Ascending aorta (tissue), 2 donors: ENCODE measurements at regions of chr7 and their contacts with region 1.

Region 1: DNA sequence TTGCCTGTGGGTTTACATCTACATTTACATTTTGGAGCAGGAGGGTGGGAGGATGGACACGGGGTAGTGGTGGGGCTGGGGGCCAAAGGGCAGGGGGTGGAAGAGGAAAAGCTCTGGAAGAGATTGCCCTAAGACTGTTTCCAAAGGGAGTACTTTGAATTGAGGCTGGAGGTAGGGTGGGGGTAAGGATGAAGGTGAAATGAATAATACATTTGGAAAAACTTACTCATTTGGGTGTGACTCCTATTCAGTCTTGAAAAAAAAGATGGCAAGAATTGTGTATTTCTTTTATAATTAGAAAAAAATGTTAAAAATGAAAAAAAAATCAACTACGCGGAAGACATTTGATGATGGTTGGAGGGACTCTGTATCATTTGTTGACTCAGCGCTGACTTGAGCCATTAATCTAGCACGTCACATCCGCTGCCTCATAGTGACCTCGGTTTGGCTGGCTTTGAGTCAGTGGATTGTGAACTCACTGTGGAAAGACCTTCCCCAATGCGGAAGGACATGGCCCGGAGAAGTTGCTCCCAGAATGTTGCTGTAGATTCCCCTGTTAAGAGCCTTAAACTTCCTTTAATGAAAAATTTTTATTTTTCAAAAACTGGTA is 2.8 kb downstream of the FAM180A start:
- DNase-seq: peak; percentile 75 to 96
- H3K4me3 ChIP-seq: peak overlapping the region; percentile 16 to 62
- H3K27ac ChIP-seq: peak overlapping the region; percentile 94
- H3K4me1 ChIP-seq: peaks cover 23 to 45% of the 10 kb centered on the region in 2 donors
- H3K27me3 ChIP-seq: no peaks in the 10 kb centered on the region
- CTCF ChIP-seq: no peak

Region 2: DNA sequence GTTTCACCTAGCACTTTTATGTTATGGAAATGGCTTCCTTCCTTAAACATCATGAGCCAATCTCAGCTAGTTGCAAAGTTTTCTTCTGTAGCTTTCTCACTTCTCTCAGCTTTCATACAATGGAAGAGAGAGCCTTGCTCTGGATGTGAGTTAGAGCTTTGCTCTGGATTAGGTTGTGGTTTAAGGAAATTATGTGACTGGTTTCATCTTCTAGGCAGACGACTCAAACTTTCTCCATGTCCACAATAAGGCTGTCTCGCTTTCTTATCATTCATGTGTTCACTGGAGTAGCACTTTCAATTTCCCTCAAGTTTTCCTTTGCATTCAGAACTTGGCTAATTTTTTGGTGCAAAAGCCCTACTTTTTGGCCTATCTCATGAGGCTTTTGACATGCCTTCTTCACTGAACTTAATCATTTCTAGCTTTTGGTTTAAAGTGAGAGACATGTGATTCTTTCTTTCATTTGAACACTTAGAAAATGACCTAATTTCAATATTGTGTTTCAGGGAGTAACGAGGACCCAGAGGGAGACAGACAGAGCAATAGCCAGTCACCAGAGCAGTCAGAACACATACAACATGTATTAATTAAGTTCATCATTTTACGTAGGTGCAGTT is 285.7 kb before region 1 on chr7:
- intact Hi-C with region 1: no loop called
- DNase-seq: no peak
- H3K4me3 ChIP-seq: no peak overlapping the region
- H3K27ac ChIP-seq: no peak overlapping the region
- H3K4me1 ChIP-seq: no peaks in the 10 kb centered on the region
- H3K27me3 ChIP-seq: no peaks in the 10 kb centered on the region
- CTCF ChIP-seq: no peak

Region 3: DNA sequence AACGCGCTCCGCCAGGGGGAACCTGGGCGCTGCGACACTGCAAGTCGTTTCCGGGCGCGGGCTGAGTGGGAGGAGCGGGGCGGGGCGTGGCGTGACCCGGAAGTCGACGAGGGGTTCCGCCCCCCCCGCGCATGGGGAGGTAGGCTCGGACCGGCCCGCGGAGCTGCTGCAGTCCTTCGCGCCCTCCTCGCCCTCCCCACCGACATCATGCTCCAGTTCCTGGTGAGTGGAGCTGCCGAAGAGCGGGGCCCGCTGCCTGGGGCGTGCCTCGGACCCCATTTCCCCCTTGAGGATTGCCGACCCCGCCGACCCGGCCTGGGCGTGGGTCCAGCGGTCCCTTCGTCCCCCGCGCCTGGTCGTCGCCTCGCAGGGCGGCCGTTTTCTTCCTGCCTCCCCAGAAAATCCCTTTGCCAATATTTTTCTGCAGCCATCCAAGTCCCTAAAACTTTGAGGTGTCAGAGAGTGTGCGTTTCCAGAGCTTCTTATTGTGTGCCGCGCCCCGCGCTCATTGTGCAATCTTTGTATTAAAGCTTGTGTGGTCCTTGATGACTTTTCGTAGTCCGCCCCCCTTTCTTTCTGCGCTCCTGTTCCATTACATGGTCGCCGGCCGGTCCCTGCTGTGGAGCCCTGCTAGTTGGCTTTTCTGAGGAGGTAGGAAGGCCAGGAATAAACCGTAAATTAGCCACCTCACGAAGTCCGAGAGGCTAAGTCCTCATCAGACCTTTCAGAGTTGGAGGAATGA is 83.3 kb before region 1 on chr7 and contains the start of gene STMP1:
- intact Hi-C with region 1: loop called (anchors 2 kb)
- DNase-seq: peak; percentile 81 to 98
- H3K4me3 ChIP-seq: peak within 1 kb of the TSS; percentile 73 to 86
- H3K27ac ChIP-seq: peak within 1 kb of the TSS; percentile 87 to 96
- H3K4me1 ChIP-seq: peaks cover 0 to 19% of the 10 kb centered on the region in 2 donors
- H3K27me3 ChIP-seq: no peaks in the 10 kb centered on the region
- CTCF ChIP-seq: peak in 1 of 3 experiments; percentile 95
- total RNA-seq, gene STMP1: 10.1 TPM

Region 4: DNA sequence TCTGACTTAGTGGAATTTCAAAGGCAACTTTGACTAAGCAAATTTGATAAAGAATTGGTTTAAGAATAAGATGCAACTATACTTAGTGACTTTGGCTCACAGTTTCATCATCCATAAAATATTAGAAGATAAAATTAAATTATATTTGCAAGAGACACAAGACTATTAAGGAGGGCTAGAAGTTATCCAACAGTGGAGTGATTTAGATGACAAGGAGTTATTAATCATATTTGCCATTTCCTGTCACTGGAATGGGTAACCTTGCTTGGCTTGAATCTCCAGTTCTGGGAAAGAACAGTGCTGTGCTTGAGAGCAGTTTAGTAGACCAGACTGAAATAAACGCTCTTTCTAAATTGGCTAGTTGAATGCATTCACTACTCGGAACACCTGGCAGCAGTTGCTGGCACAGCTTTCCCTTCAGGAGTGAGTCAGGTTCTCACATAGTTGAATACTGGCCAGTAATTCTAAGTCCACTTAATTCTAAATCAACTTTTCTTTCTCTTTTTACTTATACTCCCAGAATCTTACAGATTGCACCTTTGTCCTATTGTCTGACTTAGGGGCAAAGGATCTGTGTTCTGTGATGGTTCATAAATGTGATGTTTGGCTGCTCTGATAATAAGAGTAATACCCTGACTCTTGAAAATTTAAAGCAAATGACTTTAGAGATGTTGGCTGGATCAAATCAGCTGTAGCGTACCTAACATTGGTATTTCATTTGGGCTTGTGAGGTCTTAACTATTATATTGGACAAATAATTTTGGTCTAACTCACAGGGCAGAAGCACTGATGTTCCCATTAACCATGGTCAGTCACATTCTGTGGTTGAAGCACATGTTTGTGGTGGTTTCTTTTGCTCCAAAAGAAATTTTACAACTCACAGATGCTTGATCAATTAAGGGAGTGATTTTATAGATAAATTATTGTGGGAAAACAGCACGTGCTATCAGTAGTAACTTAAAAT is 66.9 kb before region 1 on chr7:
- intact Hi-C with region 1: loop called (anchors 2 kb)
- DNase-seq: peak; percentile 30 to 85
- H3K4me3 ChIP-seq: no peak overlapping the region
- H3K27ac ChIP-seq: peak overlapping the region; percentile 48 to 56
- H3K4me1 ChIP-seq: peaks cover 2 to 33% of the 10 kb centered on the region in 2 donors
- H3K27me3 ChIP-seq: no peaks in the 10 kb centered on the region
- CTCF ChIP-seq: no peak

Region 5: GRCh38 chr7:135710417-135711138 is 35.2 kb before region 1 on chr7:
- intact Hi-C with region 1: loop called (anchors 2 kb)
- DNase-seq: no peak
- H3K4me3 ChIP-seq: peak overlapping the region; percentile 33 to 49
- H3K27ac ChIP-seq: peak overlapping the region; percentile 55 to 71
- H3K4me1 ChIP-seq: peaks cover 6 to 36% of the 10 kb centered on the region in 2 donors
- H3K27me3 ChIP-seq: no peaks in the 10 kb centered on the region
- CTCF ChIP-seq: peak in 2 of 3 experiments; percentile 78 to 81

Region 6: GRCh38 chr7:135757719-135758411 is 12.1 kb after region 1 on chr7:
- intact Hi-C with region 1: loop called (anchors 1 kb)
- DNase-seq: peak in 1 of 2 donors; percentile 90
- H3K4me3 ChIP-seq: peak overlapping the region in 1 of 2 donors; percentile 54
- H3K27ac ChIP-seq: peak overlapping the region; percentile 93 to 97
- H3K4me1 ChIP-seq: peaks cover 12 to 57% of the 10 kb centered on the region in 2 donors
- H3K27me3 ChIP-seq: no peaks in the 10 kb centered on the region
- CTCF ChIP-seq: no peak

Region 7: DNA sequence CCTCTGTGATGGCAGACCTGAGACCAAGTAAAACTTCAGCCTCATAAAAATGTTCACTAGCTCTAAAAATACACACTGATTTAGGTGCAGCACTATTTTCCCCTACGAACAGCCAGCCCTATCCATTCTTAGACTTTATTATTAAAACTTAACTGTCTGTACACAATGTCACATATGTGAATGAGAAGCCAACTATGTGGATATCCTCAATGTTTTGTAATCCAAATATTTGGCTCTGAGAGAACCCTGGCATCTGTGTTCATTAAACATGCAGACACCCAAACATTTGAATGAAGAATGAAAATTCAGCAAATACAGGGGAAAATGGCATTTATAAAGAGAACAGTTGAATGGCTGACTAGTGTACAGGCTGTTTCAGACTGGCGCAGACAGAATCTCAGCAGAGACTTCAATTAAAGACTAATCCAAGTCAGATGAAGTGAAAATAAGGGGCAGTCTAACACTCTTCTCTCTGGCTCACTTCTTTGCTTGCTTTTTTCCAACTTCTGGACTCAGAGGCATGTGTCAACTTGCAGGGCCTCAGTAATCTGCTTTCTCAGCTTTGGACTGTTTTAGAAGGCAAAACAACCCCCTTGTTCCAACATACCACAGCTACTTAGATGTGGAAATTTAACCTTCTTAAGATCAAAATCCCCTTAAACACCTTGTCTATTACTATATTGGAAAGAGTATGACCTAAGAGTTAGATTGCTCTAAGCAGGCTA is 50.2 kb after region 1 on chr7:
- intact Hi-C with region 1: loop called (anchors 2 kb)
- DNase-seq: no peak
- H3K4me3 ChIP-seq: no peak overlapping the region
- H3K27ac ChIP-seq: peak overlapping the region; percentile 81 to 87
- H3K4me1 ChIP-seq: peaks cover 7 to 28% of the 10 kb centered on the region in 2 donors
- H3K27me3 ChIP-seq: no peaks in the 10 kb centered on the region
- CTCF ChIP-seq: no peak

Region 8: GRCh38 chr7:135977007-135977741 is 231.4 kb after region 1 on chr7 and contains the start of gene MTPN:
- intact Hi-C with region 1: loop called (anchors 5 kb)
- DNase-seq: peak; percentile 98 to 100
- H3K4me3 ChIP-seq: peak within 1 kb of the TSS; percentile 85
- H3K27ac ChIP-seq: peak within 1 kb of the TSS; percentile 81 to 84
- H3K4me1 ChIP-seq: peaks cover 0 to 23% of the 10 kb centered on the region in 2 donors
- H3K27me3 ChIP-seq: no peaks in the 10 kb centered on the region
- CTCF ChIP-seq: no peak
- total RNA-seq, gene MTPN: 43.5 TPM